ENCODE measurements at regions of chr18 and their contacts with region 1.

Region 1: GRCh38 chr18:10585260-10585659 is 59.4 kb downstream of the NAPG start:
- DNase-seq: no peak
- H3K4me3 Mint-ChIP-seq: no peak overlapping the region
- H3K27ac Mint-ChIP-seq: no peak overlapping the region
- H3K4me1 Mint-ChIP-seq: no peaks in the 10 kb centered on the region
- H3K27me3 Mint-ChIP-seq: no peaks in the 10 kb centered on the region

Region 2: DNA sequence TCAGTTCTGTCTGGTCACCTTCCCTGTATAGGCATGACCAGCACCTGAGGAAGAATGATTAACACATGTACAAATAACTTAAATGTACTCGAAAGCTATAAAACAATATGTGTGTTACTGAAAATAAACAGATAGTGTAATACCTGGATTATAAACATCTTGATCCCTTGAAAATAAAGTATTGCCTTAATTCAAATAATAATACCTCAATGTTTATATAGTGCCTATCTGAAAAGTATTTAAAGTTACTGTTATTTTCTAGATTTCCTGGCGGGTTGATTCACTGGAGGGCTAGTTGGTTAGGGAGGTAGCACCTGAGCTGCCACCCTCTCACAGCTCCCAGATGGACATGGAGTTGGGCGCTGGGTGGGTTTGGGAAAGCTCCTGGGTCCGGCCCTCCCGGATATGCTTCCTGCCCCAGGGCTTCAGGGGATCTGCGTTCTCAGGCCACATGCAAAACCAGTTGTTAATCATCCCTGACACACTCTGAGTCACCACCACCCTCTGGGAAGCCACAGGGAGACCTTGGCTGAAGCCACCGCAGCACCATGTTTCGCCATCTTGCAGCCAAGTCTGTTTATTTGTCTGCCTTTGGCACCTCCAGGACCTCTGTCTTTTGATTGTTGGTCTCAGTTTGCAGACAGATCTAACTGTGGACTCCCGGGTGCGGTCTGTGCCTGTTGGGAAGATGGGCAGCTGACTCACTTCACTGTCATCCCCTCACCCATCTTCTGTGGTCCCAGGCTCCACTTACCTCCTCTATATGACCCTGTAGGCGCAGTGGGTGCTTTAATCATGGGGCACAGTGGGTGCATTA is 841.9 kb before region 1 on chr18:
- CTCF ChIA-PET with region 1: no interaction called
- POLR2A ChIA-PET with region 1: no interaction called
- intact Hi-C with region 1: no loop called
- DNase-seq: peak; percentile 24
- H3K4me3 Mint-ChIP-seq: no peak overlapping the region
- H3K27ac Mint-ChIP-seq: no peak overlapping the region
- H3K4me1 Mint-ChIP-seq: no peaks in the 10 kb centered on the region
- H3K27me3 Mint-ChIP-seq: peaks cover 30% of the 10 kb centered on the region

Region 3: DNA sequence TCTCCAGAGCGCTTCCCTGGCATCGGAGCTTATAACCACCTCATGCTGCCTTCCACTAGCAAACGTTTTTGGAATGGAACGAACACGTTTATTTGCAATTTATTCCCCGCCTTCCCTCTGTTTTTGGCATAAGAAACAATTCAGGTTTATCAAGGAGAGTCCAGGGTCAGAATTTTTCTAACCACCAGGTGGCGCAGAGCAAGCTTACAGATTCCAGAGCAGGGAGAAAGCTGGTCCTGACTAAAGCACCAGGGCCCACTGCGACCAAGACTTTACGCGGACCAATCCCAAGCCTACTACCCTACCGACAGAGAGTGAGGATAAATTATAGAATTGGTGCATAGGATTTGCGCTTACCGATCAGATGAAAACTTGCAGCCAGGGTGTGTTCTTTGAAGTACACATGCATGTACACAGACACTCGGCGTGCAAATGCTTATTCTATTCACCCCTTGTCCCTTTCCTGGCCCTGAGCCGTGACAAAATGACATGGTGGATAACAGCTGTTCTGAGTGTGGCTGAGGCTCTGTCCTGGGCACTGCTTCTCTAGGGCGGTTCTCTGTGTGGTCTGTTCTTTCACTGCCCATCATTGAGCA is 24.7 kb before region 1 on chr18:
- CTCF ChIA-PET with region 1: interaction called, 11 read pairs
- POLR2A ChIA-PET with region 1: no interaction called
- intact Hi-C with region 1: no loop called
- DNase-seq: peak; percentile 69
- H3K4me3 Mint-ChIP-seq: no peak overlapping the region
- H3K27ac Mint-ChIP-seq: no peak overlapping the region
- H3K4me1 Mint-ChIP-seq: peaks cover 4% of the 10 kb centered on the region
- H3K27me3 Mint-ChIP-seq: no peaks in the 10 kb centered on the region